CD4-positive, alpha-beta memory T cell (primary cell): ENCODE measurements at regions of chr11 and their contacts with region 1.

Region 1: GRCh38 chr11:64878494-64879243 is at the start of gene EHD1:
- DNase-seq: peak; percentile 99 to 100 (median 99)
- H3K4me3 ChIP-seq: peak within 1 kb of the TSS; percentile 82 to 99
- H3K4me3 Mint-ChIP-seq: peak within 1 kb of the TSS; percentile 99 to 100 (median 99)
- H3K27ac ChIP-seq: peak within 1 kb of the TSS; percentile 92
- H3K27ac Mint-ChIP-seq: peak within 1 kb of the TSS; percentile 96 to 98 (median 97)
- H3K4me1 ChIP-seq: peaks cover 58% of the 10 kb centered on the region
- H3K4me1 Mint-ChIP-seq: peaks cover 34 to 77% (median 47%) of the 10 kb centered on the region in 4 donors
- H3K27me3 ChIP-seq: no peaks in the 10 kb centered on the region
- H3K27me3 Mint-ChIP-seq: no peaks in the 10 kb centered on the region
- total RNA-seq, gene EHD1: 268 to 279 TPM

Region 2: DNA sequence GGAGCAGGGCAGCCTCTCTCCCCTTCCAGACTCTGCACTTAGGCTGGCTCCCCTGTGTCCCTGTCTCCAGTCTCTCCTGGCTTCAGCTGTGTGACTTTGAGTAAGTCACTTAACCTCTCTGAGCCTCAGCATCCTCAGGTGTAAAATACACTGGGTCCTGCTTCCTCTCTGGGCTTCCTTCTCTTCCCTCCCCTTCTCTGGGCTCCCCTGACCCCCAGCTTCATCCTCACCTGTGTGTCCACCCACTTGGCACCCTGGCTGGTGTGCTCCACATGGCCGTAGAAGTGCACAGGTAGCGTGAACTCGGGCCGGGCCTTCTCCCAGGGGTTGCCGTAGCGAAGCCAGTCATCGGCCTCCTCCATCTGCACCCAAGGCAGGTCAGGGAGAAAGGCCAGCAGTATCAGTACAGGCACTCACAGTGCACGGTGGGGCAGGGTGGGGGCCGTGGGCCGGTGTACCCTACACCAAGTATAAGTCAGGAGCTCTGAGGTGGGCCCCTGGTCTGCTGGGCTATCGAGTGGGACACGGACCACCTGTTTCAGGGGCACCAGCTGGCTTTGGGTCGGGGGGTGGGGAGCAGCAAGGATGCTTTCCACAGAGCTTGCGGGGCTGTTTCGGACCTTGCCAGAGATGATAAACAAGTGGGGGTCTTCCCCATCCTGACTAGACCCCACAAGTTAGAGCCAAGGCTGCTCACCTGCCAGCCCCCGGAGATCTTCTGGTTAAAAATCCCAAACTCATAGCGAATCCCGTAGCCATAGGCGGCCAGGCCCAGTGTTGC is 120.9 kb before region 1 on chr11:
- CTCF ChIA-PET with region 1: no interaction called
- POLR2A ChIA-PET with region 1: no interaction called
- intact Hi-C with region 1: no loop called
- DNase-seq: peak in 1 of 5 donors; percentile 31
- H3K4me3 ChIP-seq: no peak overlapping the region
- H3K4me3 Mint-ChIP-seq: no peak overlapping the region
- H3K27ac ChIP-seq: no peak overlapping the region
- H3K27ac Mint-ChIP-seq: peak overlapping the region in 4 of 7 donors; percentile 32 to 72 (median 52)
- H3K4me1 ChIP-seq: peaks cover 35% of the 10 kb centered on the region
- H3K4me1 Mint-ChIP-seq: peaks cover 22 to 51% (median 31%) of the 10 kb centered on the region in 4 donors
- H3K27me3 ChIP-seq: no peaks in the 10 kb centered on the region
- H3K27me3 Mint-ChIP-seq: no peaks in the 10 kb centered on the region

Region 3: DNA sequence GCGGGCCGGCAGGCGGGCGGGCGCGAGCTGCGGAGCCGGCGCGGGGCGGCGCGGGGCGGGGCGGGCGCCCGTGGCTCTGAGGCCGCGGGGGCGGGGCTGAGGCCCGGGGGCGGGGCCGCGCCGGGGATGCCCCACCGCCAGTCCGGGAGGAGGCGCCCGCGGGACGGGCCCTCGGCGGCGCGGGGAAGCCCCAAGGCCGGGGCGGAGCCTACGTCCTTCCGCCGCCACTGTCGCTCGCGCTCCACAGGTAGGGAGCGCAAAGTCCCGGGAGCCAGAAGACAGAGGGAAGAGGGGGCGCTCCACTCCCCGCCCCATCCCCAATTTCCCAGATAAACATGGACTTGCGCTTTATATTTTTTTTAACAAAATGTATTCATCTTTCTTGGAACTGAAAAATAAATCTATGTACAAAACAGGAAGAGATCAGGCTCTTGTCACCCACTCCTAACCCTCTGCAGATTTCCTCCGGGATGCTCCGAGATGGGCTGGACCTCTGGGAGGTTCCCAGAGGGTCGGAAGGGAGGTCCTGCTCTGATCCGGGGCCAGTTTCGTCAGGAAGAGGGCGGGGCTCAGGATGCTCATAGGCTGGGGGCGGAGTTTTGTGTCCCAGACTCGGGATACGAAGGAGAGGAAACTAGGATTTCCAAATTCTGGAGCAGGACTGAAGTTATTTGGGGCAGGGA is 75.4 kb before region 1 on chr11 and contains the start of gene MAP4K2:
- CTCF ChIA-PET with region 1: no interaction called
- POLR2A ChIA-PET with region 1: interaction called, 5 read pairs
- intact Hi-C with region 1: loop called (anchors 2 kb)
- DNase-seq: peak; percentile 84 to 91 (median 89)
- H3K4me3 ChIP-seq: peak within 1 kb of the TSS; percentile 79
- H3K4me3 Mint-ChIP-seq: peak within 1 kb of the TSS; percentile 87 to 92 (median 90)
- H3K27ac ChIP-seq: peak within 1 kb of the TSS; percentile 93
- H3K27ac Mint-ChIP-seq: peak within 1 kb of the TSS; percentile 94 to 97 (median 96)
- H3K4me1 ChIP-seq: peaks cover 35% of the 10 kb centered on the region
- H3K4me1 Mint-ChIP-seq: peaks cover 9 to 48% (median 24%) of the 10 kb centered on the region in 4 donors
- H3K27me3 ChIP-seq: no peaks in the 10 kb centered on the region
- H3K27me3 Mint-ChIP-seq: no peaks in the 10 kb centered on the region
- total RNA-seq, gene MAP4K2: 122 to 128 TPM

Region 4: DNA sequence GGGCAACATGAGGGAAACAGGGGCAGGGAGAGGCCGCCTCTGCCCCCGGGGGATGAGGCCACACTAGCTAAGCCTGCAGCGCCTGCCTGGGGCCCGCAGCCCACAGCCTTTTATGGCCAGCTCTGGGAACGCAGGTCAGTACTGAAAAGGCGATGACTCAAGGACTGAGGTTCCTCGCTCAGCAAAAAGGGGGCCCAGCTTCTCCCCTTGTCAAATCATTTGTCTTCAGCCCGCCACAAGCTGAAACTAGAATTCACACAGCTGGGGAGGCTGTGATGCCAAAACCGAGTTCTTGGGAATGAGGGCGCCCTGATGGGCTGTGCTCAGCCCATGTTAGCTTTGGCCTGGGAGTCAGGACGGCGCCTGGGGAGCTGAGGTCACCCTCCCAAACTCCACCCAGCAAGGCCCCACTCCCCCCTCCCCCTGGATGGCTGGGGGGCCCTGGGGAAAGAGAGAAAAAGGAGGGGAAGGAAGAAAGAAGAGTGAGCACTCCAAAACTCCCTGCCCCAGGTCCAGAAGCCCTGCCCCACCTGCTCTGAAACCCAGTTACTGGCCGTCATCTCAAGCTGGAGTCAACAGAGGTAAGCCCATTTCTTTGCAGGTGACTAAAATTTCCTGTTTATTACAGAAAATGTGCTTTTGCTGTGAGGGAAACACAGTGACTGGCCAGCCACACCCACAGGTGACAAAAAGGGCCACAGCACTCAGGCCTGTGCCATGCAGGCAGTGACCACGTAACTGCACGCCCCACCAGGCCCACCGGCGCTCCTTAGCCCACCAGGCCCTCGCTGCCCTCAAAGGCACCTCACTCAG is 14.0 kb before region 1 on chr11:
- CTCF ChIA-PET with region 1: interaction called, 1,245 read pairs
- POLR2A ChIA-PET with region 1: interaction called, 2,105 read pairs
- intact Hi-C with region 1: loop called (anchors 1 kb)
- DNase-seq: peak in 2 of 5 donors; percentile 24 to 64
- H3K4me3 ChIP-seq: peak overlapping the region; percentile 40 to 59
- H3K4me3 Mint-ChIP-seq: peak overlapping the region; percentile 64 to 91 (median 82)
- H3K27ac ChIP-seq: peak overlapping the region; percentile 68
- H3K27ac Mint-ChIP-seq: peak overlapping the region; percentile 76 to 99 (median 95)
- H3K4me1 ChIP-seq: peaks cover 99% of the 10 kb centered on the region
- H3K4me1 Mint-ChIP-seq: peaks cover 53 to 95% (median 78%) of the 10 kb centered on the region in 4 donors
- H3K27me3 ChIP-seq: no peaks in the 10 kb centered on the region
- H3K27me3 Mint-ChIP-seq: no peaks in the 10 kb centered on the region

Region 5: GRCh38 chr11:64900263-64900678 is 21.6 kb after region 1 on chr11:
- CTCF ChIA-PET with region 1: interaction called, 29 read pairs
- POLR2A ChIA-PET with region 1: interaction called, 3 read pairs
- intact Hi-C with region 1: loop called (anchors 1 kb)
- DNase-seq: peak; percentile 76 to 96 (median 78)
- H3K4me3 ChIP-seq: no peak overlapping the region
- H3K4me3 Mint-ChIP-seq: peak overlapping the region in 7 of 8 donors; percentile 25 to 84 (median 75)
- H3K27ac ChIP-seq: peak overlapping the region; percentile 76
- H3K27ac Mint-ChIP-seq: peak overlapping the region; percentile 79 to 99 (median 95)
- H3K4me1 ChIP-seq: peaks cover 21% of the 10 kb centered on the region
- H3K4me1 Mint-ChIP-seq: peaks cover 12 to 30% (median 18%) of the 10 kb centered on the region in 4 donors
- H3K27me3 ChIP-seq: no peaks in the 10 kb centered on the region
- H3K27me3 Mint-ChIP-seq: no peaks in the 10 kb centered on the region

Region 6: GRCh38 chr11:64924102-64924851 is 45.6 kb after region 1 on chr11 and contains the start of gene PPP2R5B:
- CTCF ChIA-PET with region 1: interaction called, 4 read pairs
- POLR2A ChIA-PET with region 1: interaction called, 8 read pairs
- intact Hi-C with region 1: loop called (anchors 1 kb)
- DNase-seq: peak; percentile 87 to 95 (median 90)
- H3K4me3 ChIP-seq: peak within 1 kb of the TSS; percentile 61 to 85
- H3K4me3 Mint-ChIP-seq: peak within 1 kb of the TSS; percentile 93 to 99 (median 96)
- H3K27ac ChIP-seq: peak within 1 kb of the TSS; percentile 78
- H3K27ac Mint-ChIP-seq: peak within 1 kb of the TSS; percentile 98 to 100 (median 99)
- H3K4me1 ChIP-seq: peaks cover 20% of the 10 kb centered on the region
- H3K4me1 Mint-ChIP-seq: peaks cover 9 to 15% (median 11%) of the 10 kb centered on the region in 4 donors
- H3K27me3 ChIP-seq: no peaks in the 10 kb centered on the region
- H3K27me3 Mint-ChIP-seq: no peaks in the 10 kb centered on the region
- total RNA-seq, gene PPP2R5B: 14.0 to 15.8 TPM